Activated naive CD4-positive, alpha-beta T cell treated with anti-CD3 and anti-CD28 coated beads for 36 hours (primary cell): ENCODE measurements at regions of chr12 and their contacts with region 1.

Region 1: GRCh38 chr12:13278249-13278787 is 81.8 kb downstream of the EMP1 start:
- DNase-seq: peak; percentile 67
- H3K4me3 Mint-ChIP-seq: no peak overlapping the region
- H3K27ac Mint-ChIP-seq: no peak overlapping the region
- H3K4me1 Mint-ChIP-seq: peaks cover 3% of the 10 kb centered on the region
- H3K27me3 Mint-ChIP-seq: peaks cover 27% of the 10 kb centered on the region

Region 2: DNA sequence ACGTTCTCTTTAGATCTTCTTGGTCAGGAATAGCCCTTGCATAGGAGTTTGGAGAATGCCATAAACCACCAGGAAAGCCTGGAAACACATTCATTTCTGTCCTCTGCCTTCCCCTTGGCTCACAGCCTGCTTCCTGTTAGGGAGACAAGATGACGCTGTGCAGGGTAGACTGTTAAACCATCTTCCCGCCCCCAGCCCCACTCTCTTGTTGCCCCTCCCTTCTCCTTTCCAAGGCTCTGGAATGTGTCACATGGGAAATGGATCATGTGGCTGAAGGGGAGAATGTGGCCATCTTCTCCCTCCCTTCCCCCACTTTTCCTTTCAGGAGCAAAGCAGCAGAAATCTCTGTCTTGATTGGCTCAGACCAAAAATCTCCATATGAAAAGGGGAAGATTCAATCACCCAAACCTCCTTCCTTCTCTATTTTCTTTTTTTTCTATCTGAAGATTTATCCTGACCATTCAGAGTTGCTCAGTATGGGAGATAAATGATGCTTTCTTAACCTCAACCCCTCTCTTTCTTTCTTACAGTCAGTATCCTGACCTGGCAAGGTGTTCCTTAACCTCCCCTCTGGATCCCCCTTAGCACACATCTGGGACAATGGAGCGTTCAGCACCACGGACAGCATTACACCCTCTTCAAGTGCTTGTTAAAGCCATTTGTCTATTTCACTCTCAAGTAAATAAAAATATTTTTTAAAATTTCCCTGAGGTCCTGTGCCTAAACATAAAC is 593.8 kb before region 1 on chr12:
- CTCF ChIA-PET with region 1: no interaction called
- intact Hi-C with region 1: no loop called
- DNase-seq: peak; percentile 57
- H3K4me3 Mint-ChIP-seq: no peak overlapping the region
- H3K27ac Mint-ChIP-seq: no peak overlapping the region
- H3K4me1 Mint-ChIP-seq: peaks cover 6% of the 10 kb centered on the region
- H3K27me3 Mint-ChIP-seq: no peaks in the 10 kb centered on the region

Region 3: DNA sequence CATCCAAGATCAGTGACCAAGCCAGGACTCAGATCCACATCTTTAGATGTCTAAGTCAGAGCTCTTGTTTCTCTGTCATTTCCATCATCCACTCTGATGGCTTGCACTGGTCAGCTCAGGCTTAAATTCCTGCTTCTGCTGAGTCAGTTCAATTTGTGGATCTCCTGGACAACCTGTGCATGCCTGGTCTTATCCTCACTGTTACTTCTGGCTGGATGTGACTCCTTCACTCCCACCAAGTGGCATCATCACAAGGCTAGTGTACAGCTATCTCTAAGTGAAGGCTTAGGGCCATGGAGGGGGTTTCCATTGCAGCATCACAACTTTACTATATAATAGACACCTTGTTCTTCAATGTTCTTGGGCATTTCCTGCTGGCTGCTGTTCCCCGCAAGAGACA is 21.1 kb after region 1 on chr12:
- CTCF ChIA-PET with region 1: interaction called, 12 read pairs
- intact Hi-C with region 1: no loop called
- DNase-seq: no peak
- H3K4me3 Mint-ChIP-seq: no peak overlapping the region
- H3K27ac Mint-ChIP-seq: no peak overlapping the region
- H3K4me1 Mint-ChIP-seq: no peaks in the 10 kb centered on the region
- H3K27me3 Mint-ChIP-seq: peaks cover 10% of the 10 kb centered on the region

Region 4: GRCh38 chr12:13534645-13535398 is 256.5 kb after region 1 on chr12:
- CTCF ChIA-PET with region 1: interaction called, 5 read pairs
- intact Hi-C with region 1: loop called (anchors 2 kb)
- DNase-seq: peak; percentile 65
- H3K4me3 Mint-ChIP-seq: no peak overlapping the region
- H3K27ac Mint-ChIP-seq: no peak overlapping the region
- H3K4me1 Mint-ChIP-seq: no peaks in the 10 kb centered on the region
- H3K27me3 Mint-ChIP-seq: peaks cover 12% of the 10 kb centered on the region

Region 5: DNA sequence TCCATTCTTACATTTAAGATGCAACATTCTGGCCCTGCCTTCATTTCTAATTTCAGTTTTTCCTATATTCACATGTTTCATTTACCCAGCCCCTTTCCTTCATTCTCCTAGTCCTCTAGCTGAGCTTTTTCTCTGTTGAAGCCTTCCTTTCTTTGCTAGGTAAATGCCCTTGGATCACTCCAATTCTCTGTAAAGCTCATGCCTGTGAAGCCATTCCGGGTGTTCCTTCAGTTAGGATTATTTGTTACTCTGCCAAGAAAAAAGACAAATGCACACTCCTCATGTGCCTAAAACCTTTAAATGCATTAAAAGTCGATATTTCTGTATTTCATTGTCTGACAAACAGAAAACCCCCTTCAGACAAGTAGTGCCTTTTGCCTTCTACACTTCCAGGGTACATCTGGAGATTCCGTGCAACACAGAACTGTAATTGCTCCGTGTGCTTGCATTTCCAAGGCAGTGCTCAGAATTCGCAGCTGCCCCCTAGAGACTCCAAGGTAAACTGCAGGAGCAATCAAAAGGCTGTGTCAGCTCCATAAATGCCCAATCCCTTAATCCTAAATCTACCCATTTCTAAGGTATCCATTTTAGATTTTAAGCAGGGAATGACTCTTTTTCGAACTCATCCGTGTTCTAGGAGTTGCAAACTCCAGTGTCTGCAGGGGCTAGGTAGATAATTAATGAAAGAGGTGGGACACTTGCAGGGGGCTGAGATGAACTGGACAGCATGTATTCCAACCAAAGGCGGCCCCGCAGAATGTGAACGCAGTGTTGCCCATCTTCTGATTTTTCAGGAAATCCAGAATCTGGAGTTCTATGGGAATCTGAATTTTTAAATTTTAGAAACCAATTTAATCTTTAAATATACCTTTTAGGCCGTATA is 382.9 kb after region 1 on chr12:
- CTCF ChIA-PET with region 1: interaction called, 4 read pairs
- intact Hi-C with region 1: loop called (anchors 1 kb)
- DNase-seq: peak; percentile 50
- H3K4me3 Mint-ChIP-seq: no peak overlapping the region
- H3K27ac Mint-ChIP-seq: no peak overlapping the region
- H3K4me1 Mint-ChIP-seq: no peaks in the 10 kb centered on the region
- H3K27me3 Mint-ChIP-seq: peaks cover 8% of the 10 kb centered on the region